Gastrocnemius medialis (tissue), 4 donors: ENCODE measurements at regions of chr22 and their contacts with region 1.

Region 1: GRCh38 chr22:41746567-41747400 is 47.5 kb downstream of the MEI1 start:
- DNase-seq: peak; percentile 49 to 67
- ATAC-seq: peak; percentile 82 to 97
- H3K4me3 ChIP-seq: no peak overlapping the region
- H3K27ac ChIP-seq: no peak overlapping the region
- H3K4me1 ChIP-seq: no peaks in the 10 kb centered on the region
- H3K27me3 ChIP-seq: no peaks in the 10 kb centered on the region
- CTCF ChIP-seq: peak; percentile 47 to 76 (median 65)
- POLR2A ChIP-seq: no peak

Region 2: GRCh38 chr22:41800348-41801146 is 53.8 kb after region 1 on chr22 and contains the start of gene CCDC134:
- in situ Hi-C with region 1: no loop called
- intact Hi-C with region 1: loop called (anchors 5 kb)
- DNase-seq: peak; percentile 80 to 89
- ATAC-seq: peak; percentile 89 to 91
- H3K4me3 ChIP-seq: peak within 1 kb of the TSS; percentile 72 to 95 (median 86)
- H3K27ac ChIP-seq: peak within 1 kb of the TSS; percentile 94 to 99 (median 96)
- H3K4me1 ChIP-seq: peaks cover 19 to 21% of the 10 kb centered on the region in 2 donors
- H3K27me3 ChIP-seq: no peaks in the 10 kb centered on the region
- CTCF ChIP-seq: no peak
- POLR2A ChIP-seq: peak; percentile 65 to 79
- total RNA-seq, gene CCDC134: 3.3 to 7.7 (median 6.0) TPM